ENCODE measurements at regions of chr1 and their contacts with region 1.

Region 1: GRCh38 chr1:207883104-207883651 is 27.7 kb downstream of the CD34 start:
- DNase-seq: peak; percentile 38
- CTCF ChIP-seq: no peak

Region 2: DNA sequence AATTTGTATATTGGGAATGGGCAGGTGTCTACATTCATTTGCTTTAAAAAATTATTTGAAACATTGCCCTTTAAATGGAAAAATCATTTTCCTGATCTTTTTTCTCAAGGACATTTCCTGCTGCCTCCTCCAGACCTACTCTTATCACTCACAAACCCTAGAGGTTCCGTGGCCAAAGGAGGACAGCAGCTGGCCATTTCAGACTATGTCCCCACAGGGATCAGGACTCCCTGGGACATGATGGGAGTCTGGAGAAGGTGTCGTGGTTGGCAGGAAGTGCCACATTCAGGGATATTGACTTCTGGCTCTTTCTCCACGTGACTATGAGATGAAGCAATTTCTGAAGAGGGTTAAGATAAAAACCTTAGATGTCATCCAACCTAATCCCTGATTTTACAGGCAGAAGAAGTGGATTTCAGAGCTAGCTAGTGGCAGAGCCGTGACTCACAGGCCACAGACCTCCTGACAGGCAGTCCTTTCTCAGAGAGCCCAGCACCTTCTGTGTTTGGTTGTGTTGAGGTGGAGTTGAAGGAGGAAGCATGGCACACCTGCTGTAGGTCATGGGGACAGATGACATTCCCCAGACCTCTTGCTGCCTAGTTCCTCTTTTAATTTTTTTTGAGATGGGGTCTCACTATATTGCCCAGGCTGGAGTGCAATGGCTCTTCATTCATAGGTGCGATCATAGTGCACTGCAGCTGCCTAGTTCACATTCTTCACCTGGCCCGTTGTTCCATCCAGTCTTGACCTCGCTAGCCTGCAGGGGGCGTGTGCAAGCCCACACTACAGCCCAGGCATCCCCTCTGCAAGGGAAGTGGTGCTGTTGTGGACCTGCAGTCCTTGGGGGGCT is 1085.4 kb before region 1 on chr1:
- in situ Hi-C with region 1: no loop called
- DNase-seq: no peak
- CTCF ChIP-seq: peak; percentile 63

Region 3: DNA sequence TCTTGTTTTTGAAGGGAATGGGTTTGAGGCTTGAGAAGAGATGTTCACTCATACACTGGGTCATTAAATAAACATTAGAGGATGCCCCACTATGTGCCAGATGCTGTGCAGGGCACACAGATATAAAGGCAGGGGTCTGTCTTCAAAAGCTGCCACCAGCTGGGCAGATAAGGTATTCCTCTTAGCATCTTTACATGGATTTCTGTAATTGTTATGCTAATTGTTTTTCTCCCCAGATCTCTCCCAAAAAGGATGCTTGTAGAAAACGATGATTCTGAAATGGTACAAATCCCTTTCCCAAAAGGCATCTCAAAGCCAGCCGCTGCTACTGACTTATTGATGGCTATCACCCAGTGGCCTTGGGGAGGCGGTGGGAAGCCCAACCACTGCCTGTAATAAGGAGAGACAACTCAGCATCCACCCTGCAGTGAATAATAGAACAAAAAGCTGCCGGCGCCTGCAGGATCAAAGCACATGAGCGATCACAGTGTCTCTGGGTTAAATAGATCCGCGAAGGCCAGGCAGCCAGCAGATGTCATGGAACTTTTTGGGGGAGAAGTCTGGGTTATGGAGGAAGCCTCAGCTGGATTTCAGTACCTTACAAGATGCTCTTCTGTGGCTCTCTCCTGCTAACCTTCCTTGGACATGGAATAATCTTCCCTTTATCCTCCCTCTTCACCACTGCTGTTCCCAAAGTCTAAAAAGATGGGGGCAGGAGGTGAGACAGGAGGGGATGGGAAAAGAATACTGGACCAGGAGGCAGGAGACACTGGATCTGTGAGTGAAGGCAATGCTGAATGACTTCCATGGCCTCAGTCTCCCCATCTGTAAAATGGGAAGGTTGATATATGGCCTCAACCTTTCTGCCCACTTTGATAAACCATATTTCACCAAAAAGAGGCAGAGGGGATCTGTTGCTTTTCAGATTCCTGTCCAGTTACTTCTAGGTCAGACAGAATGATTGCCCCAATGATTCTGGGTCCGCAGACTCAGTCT is 82.5 kb after region 1 on chr1:
- in situ Hi-C with region 1: loop called (anchors 5 kb)
- DNase-seq: no peak
- CTCF ChIP-seq: no peak

Region 4: DNA sequence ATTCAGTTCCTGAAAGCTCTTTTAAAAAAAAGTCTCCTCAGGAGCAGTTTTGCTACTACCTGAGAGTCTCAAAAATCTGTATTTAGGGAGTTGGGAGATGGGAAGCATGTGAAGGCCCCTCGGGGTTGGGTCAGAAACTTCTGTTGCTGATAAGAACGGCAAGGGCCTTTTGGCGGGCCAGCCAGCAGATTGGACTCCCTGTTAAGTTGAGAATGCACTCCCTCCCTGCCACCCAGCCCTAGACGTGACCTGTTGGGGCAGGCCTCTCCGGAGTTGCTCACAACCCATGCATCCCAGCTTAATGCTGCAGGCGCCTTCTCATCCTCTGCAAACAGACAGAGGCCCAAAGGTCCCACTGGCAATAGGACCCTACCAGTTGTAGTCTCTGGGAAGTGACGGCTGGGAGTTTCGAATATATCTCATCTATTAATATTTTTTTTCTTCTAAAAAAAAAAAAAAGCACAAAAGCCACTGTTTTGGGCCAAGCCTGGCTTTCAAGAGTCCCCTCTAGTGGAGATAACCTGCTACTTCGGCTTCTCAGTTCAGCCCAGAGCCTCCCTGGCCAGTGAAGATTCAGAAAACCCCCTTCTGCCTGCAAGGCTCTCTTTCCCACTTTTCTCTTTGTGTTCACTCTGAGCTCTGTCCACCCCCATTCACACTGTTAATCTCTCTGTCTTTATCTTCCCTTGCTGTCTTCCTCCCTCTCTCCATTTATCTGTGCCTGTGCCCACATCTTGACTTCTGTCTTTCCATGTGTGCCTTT is 355.7 kb after region 1 on chr1:
- in situ Hi-C with region 1: no loop called
- DNase-seq: peak; percentile 62
- CTCF ChIP-seq: peak; percentile 54

Measured in GM13976 (cell line).